Activated B cell treated with CpG ODN at 0.5 μM for 24 hours (primary cell): ENCODE measurements at regions of chr10 and their contacts with region 1.

Region 1: GRCh38 chr10:76902949-76903348 is 734.7 kb downstream of the KCNMA1 start:
- DNase-seq: no peak
- ATAC-seq: peak; percentile 50
- H3K4me3 Mint-ChIP-seq: no peak overlapping the region
- H3K27ac Mint-ChIP-seq: no peak overlapping the region
- H3K4me1 Mint-ChIP-seq: peaks cover 1% of the 10 kb centered on the region
- H3K27me3 Mint-ChIP-seq: no peaks in the 10 kb centered on the region
- CTCF ChIP-seq: no peak

Region 2: GRCh38 chr10:76632777-76633071 is 270.2 kb before region 1 on chr10:
- CTCF ChIA-PET with region 1: no interaction called
- POLR2A ChIA-PET with region 1: no interaction called
- intact Hi-C with region 1: loop called (anchors 5 kb)
- DNase-seq: no peak
- ATAC-seq: no peak
- H3K4me3 Mint-ChIP-seq: no peak overlapping the region
- H3K27ac Mint-ChIP-seq: no peak overlapping the region
- H3K4me1 Mint-ChIP-seq: no peaks in the 10 kb centered on the region
- H3K27me3 Mint-ChIP-seq: no peaks in the 10 kb centered on the region
- CTCF ChIP-seq: no peak